OCI-LY7 (cell line): ENCODE measurements at regions of chr14 and their contacts with region 1.

Region 1: GRCh38 chr14:21092273-21093011 is 6.0 kb downstream of the ZNF219 start:
- DNase-seq: peak; percentile 88
- H3K4me3 ChIP-seq: no peak overlapping the region
- H3K27ac ChIP-seq: no peak overlapping the region
- H3K4me1 ChIP-seq: peaks cover 20% of the 10 kb centered on the region
- CTCF ChIP-seq: peak; percentile 96

Region 2: GRCh38 chr14:21103710-21104447 is 11.4 kb after region 1 on chr14:
- CTCF ChIA-PET with region 1: interaction called, 7 read pairs
- POLR2A ChIA-PET with region 1: interaction called, 13 read pairs
- intact Hi-C with region 1: loop called (anchors 1 kb)
- DNase-seq: peak; percentile 97
- H3K4me3 ChIP-seq: peak overlapping the region; percentile 85
- H3K27ac ChIP-seq: peak overlapping the region; percentile 59
- H3K4me1 ChIP-seq: peaks cover 45% of the 10 kb centered on the region
- CTCF ChIP-seq: 0 out of 2 replicates have a peak, but pooled peaks have one; percentile 76